Transverse colon (tissue), 4 donors: ENCODE measurements at regions of chr9 and their contacts with region 1.

Region 1: GRCh38 chr9:82513242-82513751 is 524.7 kb downstream of the SPATA31D1 start:
- DNase-seq: no peak
- H3K4me3 ChIP-seq: no peak overlapping the region
- H3K27ac ChIP-seq: peak overlapping the region in 2 of 4 donors; percentile 23 to 50
- H3K4me1 ChIP-seq: peaks cover 0 to 7% (median 2%) of the 10 kb centered on the region in 4 donors
- H3K27me3 ChIP-seq: no peaks in the 10 kb centered on the region
- CTCF ChIP-seq: no peak
- EP300 ChIP-seq: no peak
- POLR2A ChIP-seq: no peak

Region 2: DNA sequence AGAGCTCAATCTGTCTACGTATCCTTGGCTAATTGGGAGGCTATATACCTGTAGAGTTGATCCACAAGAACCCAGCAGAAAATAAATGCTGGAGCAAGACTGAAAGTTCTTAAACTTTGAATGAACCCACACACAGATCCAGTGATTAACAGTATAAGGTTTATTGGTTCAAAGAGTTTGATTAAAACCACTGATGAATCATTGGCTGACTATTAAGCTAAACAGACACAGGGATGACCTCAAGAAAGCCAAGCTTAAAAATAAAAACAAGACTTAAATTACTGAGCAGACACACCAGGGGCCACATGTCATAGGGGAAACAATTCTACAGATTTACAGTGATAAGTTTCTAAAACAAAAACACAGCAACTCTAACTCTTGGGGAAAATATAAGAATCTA is 361.1 kb before region 1 on chr9:
- in situ Hi-C with region 1: no loop called
- intact Hi-C with region 1: no loop called
- DNase-seq: no peak
- H3K4me3 ChIP-seq: no peak overlapping the region
- H3K27ac ChIP-seq: no peak overlapping the region
- H3K4me1 ChIP-seq: no peaks in the 10 kb centered on the region
- H3K27me3 ChIP-seq: no peaks in the 10 kb centered on the region
- CTCF ChIP-seq: no peak
- EP300 ChIP-seq: no peak
- POLR2A ChIP-seq: no peak

Region 3: GRCh38 chr9:82216435-82216834 is 296.9 kb before region 1 on chr9:
- in situ Hi-C with region 1: no loop called
- intact Hi-C with region 1: no loop called
- DNase-seq: no peak
- H3K4me3 ChIP-seq: no peak overlapping the region
- H3K27ac ChIP-seq: no peak overlapping the region
- H3K4me1 ChIP-seq: no peaks in the 10 kb centered on the region
- H3K27me3 ChIP-seq: no peaks in the 10 kb centered on the region
- CTCF ChIP-seq: no peak
- EP300 ChIP-seq: no peak
- POLR2A ChIP-seq: no peak

Region 4: GRCh38 chr9:82410305-82410704 is 103.0 kb before region 1 on chr9:
- in situ Hi-C with region 1: loop called in 1 of 4 experiments (anchors 25 kb)
- intact Hi-C with region 1: no loop called
- DNase-seq: no peak
- H3K4me3 ChIP-seq: no peak overlapping the region
- H3K27ac ChIP-seq: no peak overlapping the region
- H3K4me1 ChIP-seq: no peaks in the 10 kb centered on the region
- H3K27me3 ChIP-seq: no peaks in the 10 kb centered on the region
- CTCF ChIP-seq: no peak
- EP300 ChIP-seq: no peak
- POLR2A ChIP-seq: no peak

Region 5: GRCh38 chr9:82987370-82988189 is 474.3 kb after region 1 on chr9:
- in situ Hi-C with region 1: no loop called
- intact Hi-C with region 1: no loop called
- DNase-seq: peak; percentile 78
- H3K4me3 ChIP-seq: no peak overlapping the region
- H3K27ac ChIP-seq: peak overlapping the region; percentile 6 to 68 (median 56)
- H3K4me1 ChIP-seq: peaks cover 3 to 29% (median 10%) of the 10 kb centered on the region in 4 donors
- H3K27me3 ChIP-seq: no peaks in the 10 kb centered on the region
- CTCF ChIP-seq: no peak
- EP300 ChIP-seq: no peak
- POLR2A ChIP-seq: no peak